Uterus (tissue), 4 donors: ENCODE measurements at regions of chr1 and their contacts with region 1.

Region 1: GRCh38 chr1:222465211-222466041 is 82.5 kb downstream of the HHIPL2 start:
- DNase-seq: peak; percentile 87 to 92
- H3K4me3 ChIP-seq: peak overlapping the region; percentile 22 to 41
- H3K27ac ChIP-seq: peak overlapping the region; percentile 78 to 82
- H3K4me1 ChIP-seq: no peaks in the 10 kb centered on the region
- H3K27me3 ChIP-seq: no peaks in the 10 kb centered on the region
- CTCF ChIP-seq: peak; percentile 90 to 100 (median 100)
- POLR2A ChIP-seq: peak; percentile 10 to 34

Region 2: DNA sequence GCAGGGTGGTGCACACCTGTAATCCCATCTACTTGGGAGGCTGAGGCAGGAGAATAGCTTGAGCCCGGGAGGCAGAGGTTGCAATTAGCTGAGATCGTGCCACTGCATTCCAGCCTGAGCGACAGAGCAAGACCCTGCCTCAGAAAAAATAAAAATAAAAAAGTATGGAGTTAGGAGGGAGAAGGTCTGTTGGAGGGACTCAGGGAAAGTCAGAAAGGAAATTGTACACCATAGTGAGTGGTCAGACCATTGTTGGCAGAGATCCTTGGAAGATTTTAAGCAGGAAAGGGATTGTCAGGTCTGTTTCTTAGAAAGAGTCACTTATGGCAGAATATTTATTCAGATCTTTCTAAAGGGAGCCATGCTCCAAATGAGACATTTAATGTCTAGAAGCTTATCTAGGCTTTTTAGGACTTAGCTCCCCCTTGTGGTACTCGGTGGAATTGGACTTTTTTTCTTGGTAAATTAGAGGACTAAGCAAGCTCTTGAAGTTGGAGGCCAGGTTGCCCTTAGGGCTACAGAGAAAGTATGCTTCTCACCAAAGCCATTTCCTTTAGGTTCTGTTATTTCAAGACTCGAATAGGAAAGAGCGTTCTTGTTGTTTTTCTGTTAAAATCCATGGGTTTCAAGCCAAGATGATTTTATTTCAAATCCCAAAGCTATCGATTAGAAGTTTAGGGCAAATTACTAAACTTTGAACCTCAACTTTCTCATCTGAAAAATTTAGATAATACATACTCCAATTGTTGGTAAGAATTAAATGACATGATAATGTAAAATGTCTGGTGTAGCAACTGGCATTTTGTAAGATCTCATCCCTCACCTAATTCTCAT is 169.0 kb after region 1 on chr1:
- intact Hi-C with region 1: loop called (anchors 10 kb)
- DNase-seq: peak in 1 of 2 donors; percentile 83
- H3K4me3 ChIP-seq: no peak overlapping the region
- H3K27ac ChIP-seq: peak overlapping the region in 1 of 2 donors; percentile 20
- H3K4me1 ChIP-seq: no peaks in the 10 kb centered on the region
- H3K27me3 ChIP-seq: no peaks in the 10 kb centered on the region
- CTCF ChIP-seq: peak; percentile 77 to 91 (median 81)
- POLR2A ChIP-seq: no peak